Activated naive CD4-positive, alpha-beta T cell treated with anti-CD3 and anti-CD28 coated beads, Interleukin-2, amount 10 ng/mL, durations not matched to agents 7 days and 5 days (primary cell): ENCODE measurements at regions of chr3 and their contacts with region 1.

Region 1: DNA sequence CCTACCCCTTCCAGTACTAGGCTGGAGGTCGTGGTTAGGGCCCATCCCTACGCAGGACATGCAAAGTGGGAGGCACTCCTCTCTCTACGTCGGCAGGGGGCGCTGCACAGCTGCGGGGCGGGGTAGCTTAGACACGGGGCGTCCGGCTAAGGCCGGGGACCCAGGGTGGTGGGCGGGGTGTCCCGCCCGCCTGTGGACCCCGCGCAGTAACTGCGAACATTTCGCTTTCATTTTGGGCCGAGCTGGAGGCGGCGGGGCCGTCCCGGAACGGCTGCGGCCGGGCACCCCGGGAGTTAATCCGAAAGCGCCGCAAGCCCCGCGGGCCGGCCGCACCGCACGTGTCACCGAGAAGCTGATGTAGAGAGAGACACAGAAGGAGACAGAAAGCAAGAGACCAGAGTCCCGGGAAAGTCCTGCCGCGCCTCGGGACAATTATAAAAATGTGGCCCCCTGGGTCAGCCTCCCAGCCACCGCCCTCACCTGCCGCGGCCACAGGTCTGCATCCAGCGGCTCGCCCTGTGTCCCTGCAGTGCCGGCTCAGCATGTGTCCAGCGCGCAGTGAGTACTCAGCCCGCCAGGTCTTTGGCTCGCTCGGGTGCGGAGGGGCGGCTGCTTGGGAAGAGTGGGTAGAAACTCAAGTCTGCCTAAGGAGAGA is at the start of gene IL12A:
- DNase-seq: peak; percentile 86
- H3K4me3 Mint-ChIP-seq: peak within 1 kb of the TSS; percentile 73
- H3K27ac Mint-ChIP-seq: no peak within 1 kb of the TSS
- H3K4me1 Mint-ChIP-seq: peaks cover 14% of the 10 kb centered on the region
- H3K27me3 Mint-ChIP-seq: peaks cover 32% of the 10 kb centered on the region

Region 2: DNA sequence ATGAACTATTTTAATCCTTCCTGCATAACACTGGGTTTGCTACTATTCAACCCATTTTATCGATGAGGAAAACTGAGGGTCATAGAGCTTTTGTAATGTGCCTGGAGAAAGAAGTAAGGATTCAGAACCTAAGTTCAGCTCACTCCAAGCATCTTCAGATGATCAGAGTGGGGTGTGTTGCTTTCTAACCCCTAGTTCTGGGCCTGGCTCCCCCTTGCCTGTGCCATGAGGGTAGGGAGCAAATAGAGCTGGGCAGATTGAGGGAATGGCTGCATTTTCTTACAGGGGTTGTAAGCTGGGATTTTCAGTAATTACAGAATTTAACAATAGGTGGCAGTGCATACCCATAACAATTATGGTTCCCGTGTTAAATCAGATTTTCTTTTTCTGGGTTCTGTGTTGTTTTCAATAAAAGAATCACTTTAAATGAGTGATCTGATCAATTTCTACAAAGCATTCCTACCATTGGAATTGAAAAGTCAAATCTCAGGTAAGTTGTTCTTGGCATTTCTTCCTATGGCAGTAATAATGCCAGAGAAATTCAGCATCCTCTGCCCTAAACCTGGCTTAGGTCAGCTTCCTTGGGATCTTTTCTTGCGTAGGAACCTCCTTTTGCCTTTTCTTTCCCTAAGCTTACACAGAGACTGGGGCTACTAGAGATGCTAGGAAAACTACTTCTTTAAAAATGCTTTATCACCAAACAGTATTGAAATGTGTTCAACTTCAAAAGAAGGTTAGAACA is 103.9 kb before region 1 on chr3:
- CTCF ChIA-PET with region 1: interaction called, 11 read pairs
- DNase-seq: no peak
- H3K4me3 Mint-ChIP-seq: no peak overlapping the region
- H3K27ac Mint-ChIP-seq: no peak overlapping the region
- H3K4me1 Mint-ChIP-seq: no peaks in the 10 kb centered on the region
- H3K27me3 Mint-ChIP-seq: peaks cover 7% of the 10 kb centered on the region

Region 3: GRCh38 chr3:159897331-159898075 is 91.2 kb before region 1 on chr3:
- CTCF ChIA-PET with region 1: no interaction called
- DNase-seq: no peak
- H3K4me3 Mint-ChIP-seq: no peak overlapping the region
- H3K27ac Mint-ChIP-seq: no peak overlapping the region
- H3K4me1 Mint-ChIP-seq: no peaks in the 10 kb centered on the region
- H3K27me3 Mint-ChIP-seq: peaks cover 22% of the 10 kb centered on the region

Region 4: GRCh38 chr3:160003520-160004128 is 14.9 kb after region 1 on chr3:
- CTCF ChIA-PET with region 1: interaction called, 94 read pairs
- DNase-seq: peak; percentile 54
- H3K4me3 Mint-ChIP-seq: no peak overlapping the region
- H3K27ac Mint-ChIP-seq: no peak overlapping the region
- H3K4me1 Mint-ChIP-seq: peaks cover 3% of the 10 kb centered on the region
- H3K27me3 Mint-ChIP-seq: no peaks in the 10 kb centered on the region

Region 5: GRCh38 chr3:160010578-160010977 is 21.8 kb after region 1 on chr3:
- CTCF ChIA-PET with region 1: interaction called, 94 read pairs
- DNase-seq: no peak
- H3K4me3 Mint-ChIP-seq: no peak overlapping the region
- H3K27ac Mint-ChIP-seq: no peak overlapping the region
- H3K4me1 Mint-ChIP-seq: peaks cover 27% of the 10 kb centered on the region
- H3K27me3 Mint-ChIP-seq: no peaks in the 10 kb centered on the region

Region 6: GRCh38 chr3:160027541-160028195 is 38.9 kb after region 1 on chr3:
- CTCF ChIA-PET with region 1: interaction called, 14 read pairs
- DNase-seq: no peak
- H3K4me3 Mint-ChIP-seq: no peak overlapping the region
- H3K27ac Mint-ChIP-seq: peak overlapping the region; percentile 86
- H3K4me1 Mint-ChIP-seq: peaks cover 15% of the 10 kb centered on the region
- H3K27me3 Mint-ChIP-seq: no peaks in the 10 kb centered on the region